Dendritic cell treated with granulocyte-macrophage colony-stimulating factor and Interleukin-4, amounts not matched to agents 40 ng/mL and 50 ng/mL, for 4 days (primary cell): ENCODE measurements at regions of chr14 and their contacts with region 1.

Region 1: GRCh38 chr14:71320107-71320733 is 413.0 kb downstream of the PCNX1 start:
- H3K4me3 Mint-ChIP-seq: peak within 1 kb of the TSS; percentile 91
- H3K27ac Mint-ChIP-seq: peak within 1 kb of the TSS; percentile 97
- H3K4me1 Mint-ChIP-seq: peaks cover 47% of the 10 kb centered on the region
- H3K27me3 Mint-ChIP-seq: peaks cover 3% of the 10 kb centered on the region

Region 2: DNA sequence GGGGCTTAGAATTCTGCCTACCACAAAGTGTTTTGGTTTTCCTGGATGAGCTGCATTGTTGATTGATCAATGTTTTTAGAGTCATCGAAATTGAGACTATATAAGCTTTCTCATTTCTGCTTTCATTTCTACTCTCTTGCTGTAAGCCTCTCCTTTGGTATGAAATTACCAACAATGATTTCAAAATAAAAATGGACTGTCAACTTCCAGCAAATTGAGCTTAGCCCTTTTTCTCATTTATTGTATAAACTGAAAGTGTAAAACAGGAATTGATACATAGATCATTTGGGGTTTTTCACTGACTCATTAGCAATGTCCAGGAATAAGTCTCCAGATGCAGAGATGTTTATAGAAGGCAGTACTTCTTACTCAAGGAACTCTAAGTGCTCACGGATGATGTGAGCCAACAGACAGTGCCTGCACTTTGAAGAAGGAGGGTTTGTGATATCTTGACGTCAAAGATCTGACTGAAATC is 433.0 kb before region 1 on chr14:
- intact Hi-C with region 1: no loop called
- H3K4me3 Mint-ChIP-seq: peak overlapping the region; percentile 47
- H3K27ac Mint-ChIP-seq: peak overlapping the region; percentile 79
- H3K4me1 Mint-ChIP-seq: peaks cover 60% of the 10 kb centered on the region
- H3K27me3 Mint-ChIP-seq: peaks cover 71% of the 10 kb centered on the region

Region 3: GRCh38 chr14:71138448-71139293 is 181.5 kb before region 1 on chr14:
- intact Hi-C with region 1: loop called (anchors 1 kb)
- H3K4me3 Mint-ChIP-seq: no peak overlapping the region
- H3K27ac Mint-ChIP-seq: peak overlapping the region; percentile 0
- H3K4me1 Mint-ChIP-seq: peaks cover 35% of the 10 kb centered on the region
- H3K27me3 Mint-ChIP-seq: no peaks in the 10 kb centered on the region

Region 4: GRCh38 chr14:71242237-71242748 is 77.9 kb before region 1 on chr14:
- intact Hi-C with region 1: no loop called
- H3K4me3 Mint-ChIP-seq: no peak overlapping the region
- H3K27ac Mint-ChIP-seq: no peak overlapping the region
- H3K4me1 Mint-ChIP-seq: no peaks in the 10 kb centered on the region
- H3K27me3 Mint-ChIP-seq: no peaks in the 10 kb centered on the region

Region 5: DNA sequence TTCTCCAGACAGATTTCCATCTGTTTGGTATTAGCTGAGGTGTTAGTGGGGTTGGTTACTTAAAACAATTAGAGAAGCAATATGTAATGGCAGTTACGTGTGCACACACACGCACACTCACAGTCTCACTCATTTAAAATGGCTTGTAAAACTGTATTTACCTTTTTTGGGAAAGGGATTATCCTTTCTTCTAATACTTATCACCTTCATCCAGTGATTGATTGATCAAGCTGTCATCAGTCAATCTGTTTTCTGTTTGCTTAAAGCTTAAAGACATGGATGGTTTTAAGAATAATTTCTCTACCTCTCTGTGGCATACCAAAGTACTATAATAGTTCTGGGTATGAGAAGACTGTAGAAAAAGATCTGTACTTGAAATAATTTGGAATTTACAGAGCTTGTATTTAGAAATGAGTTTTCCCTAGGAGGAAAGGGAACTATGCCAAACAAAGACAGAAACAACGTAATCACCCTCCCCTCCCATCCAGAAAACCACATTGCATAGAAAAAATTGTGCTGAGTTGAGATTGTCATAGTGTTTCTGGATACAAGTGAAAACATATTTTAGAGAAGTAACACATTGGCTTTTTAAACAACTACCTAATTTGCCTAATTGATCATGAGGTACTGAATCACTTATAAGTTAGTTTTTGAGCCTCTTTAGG is 42.8 kb after region 1 on chr14:
- intact Hi-C with region 1: loop called (anchors 2 kb)
- H3K4me3 Mint-ChIP-seq: no peak overlapping the region
- H3K27ac Mint-ChIP-seq: peak overlapping the region; percentile 86
- H3K4me1 Mint-ChIP-seq: peaks cover 52% of the 10 kb centered on the region
- H3K27me3 Mint-ChIP-seq: no peaks in the 10 kb centered on the region

Region 6: DNA sequence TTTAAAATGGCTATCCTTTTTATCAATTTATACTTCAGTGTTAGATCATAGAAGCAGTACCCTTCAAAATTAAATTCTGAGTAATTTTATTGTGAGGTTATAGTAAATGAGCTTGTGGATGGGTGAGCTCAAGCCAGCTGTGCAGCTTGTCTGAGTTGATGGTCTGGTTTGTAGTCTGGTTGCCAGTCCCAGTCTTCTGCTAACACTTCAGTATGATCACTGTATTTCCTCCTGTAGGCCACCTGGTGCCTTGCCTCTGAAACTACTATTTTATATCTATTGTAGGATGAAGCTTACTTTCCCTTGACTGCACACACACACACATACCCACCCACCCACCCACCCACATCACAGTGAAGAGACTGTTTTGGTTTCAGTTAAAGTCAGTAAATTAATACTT is 83.4 kb after region 1 on chr14:
- intact Hi-C with region 1: loop called (anchors 2 kb)
- H3K4me3 Mint-ChIP-seq: no peak overlapping the region
- H3K27ac Mint-ChIP-seq: no peak overlapping the region
- H3K4me1 Mint-ChIP-seq: peaks cover 24% of the 10 kb centered on the region
- H3K27me3 Mint-ChIP-seq: no peaks in the 10 kb centered on the region

Region 7: GRCh38 chr14:71753126-71753830 is 433.1 kb after region 1 on chr14:
- intact Hi-C with region 1: loop called (anchors 5 kb)
- H3K4me3 Mint-ChIP-seq: peak overlapping the region; percentile 34
- H3K27ac Mint-ChIP-seq: no peak overlapping the region
- H3K4me1 Mint-ChIP-seq: peaks cover 15% of the 10 kb centered on the region
- H3K27me3 Mint-ChIP-seq: peaks cover 1% of the 10 kb centered on the region